Activated CD4-positive, alpha-beta T cell treated with anti-CD3 and anti-CD28 coated beads for 36 hours (primary cell): ENCODE measurements at regions of chr18 and their contacts with region 1.

Region 1: DNA sequence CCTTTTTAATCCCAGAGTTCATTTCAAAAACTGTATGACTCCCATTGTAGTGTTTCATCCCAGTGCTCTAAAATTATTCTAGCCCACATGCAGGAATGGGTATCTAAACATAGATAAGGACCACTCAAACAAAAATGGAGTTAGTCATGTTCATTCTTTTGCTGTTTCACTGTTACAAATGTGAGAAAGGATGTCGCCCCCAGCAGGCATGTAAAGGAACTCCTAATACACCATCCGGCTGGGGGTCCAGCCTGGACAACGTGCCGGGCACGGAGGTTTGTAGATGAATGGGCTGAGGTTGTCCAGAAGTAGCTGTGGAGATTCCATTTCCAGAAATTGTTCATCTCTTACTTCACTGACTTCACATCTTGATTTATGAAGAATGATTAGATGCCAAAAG is 101.9 kb upstream of the RAB12 start:
- DNase-seq: peak; percentile 18
- ATAC-seq: no peak
- H3K4me3 Mint-ChIP-seq: no peak overlapping the region
- H3K27ac Mint-ChIP-seq: no peak overlapping the region
- H3K4me1 Mint-ChIP-seq: no peaks in the 10 kb centered on the region
- H3K27me3 Mint-ChIP-seq: peaks cover 4% of the 10 kb centered on the region

Region 2: DNA sequence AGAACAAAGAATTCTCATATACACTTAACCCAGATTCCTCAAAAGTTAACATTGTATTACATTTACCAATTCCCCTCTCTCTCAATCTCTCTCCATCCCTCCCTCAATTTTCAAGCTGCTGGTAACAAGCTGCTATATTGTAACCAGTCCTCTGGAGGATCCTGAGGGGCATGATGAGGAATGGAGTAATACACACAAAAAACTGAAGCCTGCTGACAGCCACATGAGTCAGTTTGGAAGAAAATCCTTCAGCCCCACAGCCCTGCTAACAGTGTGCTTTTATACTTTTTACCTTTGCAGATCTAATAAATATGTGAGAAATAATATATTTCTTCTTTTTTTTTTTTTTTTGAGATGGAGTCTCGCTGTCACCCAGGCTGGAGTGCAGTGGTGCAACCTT is 63.9 kb before region 1 on chr18:
- CTCF ChIA-PET with region 1: no interaction called
- POLR2A ChIA-PET with region 1: no interaction called
- intact Hi-C with region 1: loop called in 1 of 2 experiments (anchors 10 kb)
- DNase-seq: no peak
- ATAC-seq: no peak
- H3K4me3 Mint-ChIP-seq: no peak overlapping the region
- H3K27ac Mint-ChIP-seq: no peak overlapping the region
- H3K4me1 Mint-ChIP-seq: no peaks in the 10 kb centered on the region
- H3K27me3 Mint-ChIP-seq: peaks cover 7% of the 10 kb centered on the region

Region 3: DNA sequence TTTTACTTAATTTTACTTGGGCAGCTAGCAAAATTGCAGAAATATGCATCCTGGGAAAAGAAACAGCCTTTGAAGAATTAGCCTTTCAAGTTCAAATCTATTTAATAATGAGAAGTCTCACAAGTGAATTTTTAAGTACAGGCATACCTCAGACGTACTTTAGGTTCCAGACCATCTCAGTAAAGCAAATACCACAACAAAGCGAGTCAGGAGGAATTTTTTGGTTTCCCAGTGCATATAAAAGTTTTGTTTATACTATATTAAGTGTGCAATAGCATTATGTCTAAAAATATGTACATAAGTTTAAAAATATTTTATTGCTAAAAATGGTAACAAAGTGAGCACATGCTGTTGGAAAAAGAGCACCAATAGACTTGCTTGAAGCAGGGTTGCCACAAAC is 776.4 kb after region 1 on chr18:
- CTCF ChIA-PET with region 1: no interaction called
- POLR2A ChIA-PET with region 1: no interaction called
- intact Hi-C with region 1: no loop called
- DNase-seq: no peak
- ATAC-seq: no peak
- H3K4me3 Mint-ChIP-seq: no peak overlapping the region
- H3K27ac Mint-ChIP-seq: no peak overlapping the region
- H3K4me1 Mint-ChIP-seq: no peaks in the 10 kb centered on the region
- H3K27me3 Mint-ChIP-seq: no peaks in the 10 kb centered on the region